Activated B cell treated with CpG ODN at 0.5 μM for 24 hours (primary cell): ENCODE measurements at regions of chr1 and their contacts with region 1.

Region 1: DNA sequence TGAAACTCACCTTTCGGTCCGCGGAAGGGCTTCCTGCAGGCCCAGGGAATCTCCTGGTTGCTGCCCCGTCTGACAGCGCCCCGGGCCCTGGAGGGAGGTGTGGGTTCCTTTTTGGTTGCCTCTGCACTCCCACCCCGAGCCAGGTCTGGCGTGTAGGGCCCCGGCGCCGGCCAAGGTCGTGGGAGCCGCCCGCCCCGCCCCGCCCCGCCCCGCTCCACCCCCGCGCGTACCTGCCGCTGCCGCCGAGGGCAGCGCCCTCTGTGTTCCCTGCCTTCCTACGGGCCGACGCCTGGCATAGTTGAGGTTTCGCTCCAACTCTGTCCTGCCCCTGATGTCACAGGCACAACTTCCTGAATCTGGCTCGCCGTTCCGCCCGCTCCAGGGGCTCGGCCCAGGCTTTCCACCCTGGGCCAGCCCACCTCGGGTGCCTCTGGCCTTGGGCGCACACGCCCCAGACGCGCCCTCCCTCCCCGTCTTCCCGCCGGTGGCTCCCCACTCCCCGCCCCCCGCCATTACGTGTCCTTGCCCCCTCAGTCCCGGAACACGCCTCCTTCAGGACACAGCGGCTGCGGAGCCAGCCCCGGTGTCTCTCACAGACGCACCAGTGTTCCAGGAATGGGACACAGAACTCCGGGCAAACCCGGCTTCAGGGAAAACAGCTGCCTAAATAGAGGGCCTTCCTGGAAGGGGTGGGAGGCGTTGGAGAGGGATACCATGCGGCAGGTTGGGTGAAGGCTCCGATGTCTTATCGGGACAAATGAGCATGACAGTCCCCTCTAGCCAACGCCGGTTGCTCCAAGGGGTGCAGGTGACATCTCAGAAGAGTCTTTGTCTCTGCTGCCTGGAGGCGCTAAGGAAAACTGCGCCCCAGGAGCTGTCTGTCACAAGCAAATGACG is at the start of gene KIAA0040:
- DNase-seq: peak; percentile 54
- ATAC-seq: peak; percentile 53
- H3K4me3 Mint-ChIP-seq: peak within 1 kb of the TSS; percentile 99
- H3K27ac Mint-ChIP-seq: peak within 1 kb of the TSS; percentile 97
- H3K4me1 Mint-ChIP-seq: peaks cover 92% of the 10 kb centered on the region
- H3K27me3 Mint-ChIP-seq: no peaks in the 10 kb centered on the region
- CTCF ChIP-seq: no peak
- total RNA-seq, gene KIAA0040: 55.5 and 57.2 TPM in 2 replicates

Region 2: GRCh38 chr1:175174309-175175165 is 18.3 kb before region 1 on chr1:
- CTCF ChIA-PET with region 1: no interaction called
- POLR2A ChIA-PET with region 1: interaction called, 9 read pairs
- intact Hi-C with region 1: loop called (anchors 2 kb)
- DNase-seq: no peak
- ATAC-seq: no peak
- H3K4me3 Mint-ChIP-seq: no peak overlapping the region
- H3K27ac Mint-ChIP-seq: peak overlapping the region; percentile 72
- H3K4me1 Mint-ChIP-seq: peaks cover 88% of the 10 kb centered on the region
- H3K27me3 Mint-ChIP-seq: no peaks in the 10 kb centered on the region
- CTCF ChIP-seq: no peak

Region 3: GRCh38 chr1:175179845-175180590 is 12.9 kb before region 1 on chr1:
- CTCF ChIA-PET with region 1: interaction called, 4 read pairs
- POLR2A ChIA-PET with region 1: interaction called, 11 read pairs
- intact Hi-C with region 1: loop called (anchors 1 kb)
- DNase-seq: no peak
- ATAC-seq: peak; percentile 42
- H3K4me3 Mint-ChIP-seq: peak overlapping the region; percentile 45
- H3K27ac Mint-ChIP-seq: peak overlapping the region; percentile 79
- H3K4me1 Mint-ChIP-seq: peaks cover 90% of the 10 kb centered on the region
- H3K27me3 Mint-ChIP-seq: no peaks in the 10 kb centered on the region
- CTCF ChIP-seq: no peak

Region 4: DNA sequence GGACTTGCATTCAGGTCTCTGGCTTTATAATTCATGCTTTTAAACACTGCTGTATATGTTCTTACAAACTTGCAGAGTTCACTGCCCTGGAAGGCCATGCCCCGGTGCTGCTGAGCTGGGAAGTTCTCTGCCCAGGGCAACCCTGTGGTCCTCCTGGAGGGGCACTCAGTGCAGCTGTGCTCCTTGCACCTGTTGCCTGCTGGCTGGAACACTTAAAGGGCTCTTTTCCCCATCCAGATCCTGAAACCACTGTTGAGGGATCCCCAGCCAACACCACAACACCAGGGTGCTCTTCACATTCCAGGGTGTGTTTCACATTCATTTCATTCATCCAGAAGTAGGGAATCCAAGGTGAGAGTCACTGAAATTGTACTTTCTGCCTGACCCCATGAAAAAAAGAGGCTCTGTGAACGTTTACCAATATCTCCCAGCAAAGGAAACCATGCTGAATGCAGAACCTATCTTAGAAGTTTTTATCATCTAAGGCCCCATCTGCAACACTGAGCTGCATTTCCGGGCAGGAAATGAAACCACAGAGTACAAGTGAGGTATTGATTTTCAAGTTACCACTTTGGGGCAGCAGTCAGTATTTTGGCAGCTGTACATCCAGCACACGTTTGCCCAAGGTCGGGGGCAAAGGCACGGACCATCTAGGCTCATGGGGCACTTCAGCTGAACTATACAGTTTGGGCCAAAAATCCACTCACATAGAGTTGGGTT is 16.1 kb after region 1 on chr1:
- CTCF ChIA-PET with region 1: interaction called, 13 read pairs
- POLR2A ChIA-PET with region 1: interaction called, 64 read pairs
- intact Hi-C with region 1: loop called (anchors 1 kb)
- DNase-seq: no peak
- ATAC-seq: peak; percentile 84
- H3K4me3 Mint-ChIP-seq: peak overlapping the region; percentile 80
- H3K27ac Mint-ChIP-seq: peak overlapping the region; percentile 98
- H3K4me1 Mint-ChIP-seq: peaks cover 64% of the 10 kb centered on the region
- H3K27me3 Mint-ChIP-seq: no peaks in the 10 kb centered on the region
- CTCF ChIP-seq: no peak

Region 5: GRCh38 chr1:175221666-175222175 is 28.8 kb after region 1 on chr1:
- CTCF ChIA-PET with region 1: interaction called, 6 read pairs
- POLR2A ChIA-PET with region 1: interaction called, 16 read pairs
- intact Hi-C with region 1: loop called (anchors 1 kb)
- DNase-seq: no peak
- ATAC-seq: no peak
- H3K4me3 Mint-ChIP-seq: no peak overlapping the region
- H3K27ac Mint-ChIP-seq: no peak overlapping the region
- H3K4me1 Mint-ChIP-seq: peaks cover 78% of the 10 kb centered on the region
- H3K27me3 Mint-ChIP-seq: no peaks in the 10 kb centered on the region
- CTCF ChIP-seq: no peak

Region 6: DNA sequence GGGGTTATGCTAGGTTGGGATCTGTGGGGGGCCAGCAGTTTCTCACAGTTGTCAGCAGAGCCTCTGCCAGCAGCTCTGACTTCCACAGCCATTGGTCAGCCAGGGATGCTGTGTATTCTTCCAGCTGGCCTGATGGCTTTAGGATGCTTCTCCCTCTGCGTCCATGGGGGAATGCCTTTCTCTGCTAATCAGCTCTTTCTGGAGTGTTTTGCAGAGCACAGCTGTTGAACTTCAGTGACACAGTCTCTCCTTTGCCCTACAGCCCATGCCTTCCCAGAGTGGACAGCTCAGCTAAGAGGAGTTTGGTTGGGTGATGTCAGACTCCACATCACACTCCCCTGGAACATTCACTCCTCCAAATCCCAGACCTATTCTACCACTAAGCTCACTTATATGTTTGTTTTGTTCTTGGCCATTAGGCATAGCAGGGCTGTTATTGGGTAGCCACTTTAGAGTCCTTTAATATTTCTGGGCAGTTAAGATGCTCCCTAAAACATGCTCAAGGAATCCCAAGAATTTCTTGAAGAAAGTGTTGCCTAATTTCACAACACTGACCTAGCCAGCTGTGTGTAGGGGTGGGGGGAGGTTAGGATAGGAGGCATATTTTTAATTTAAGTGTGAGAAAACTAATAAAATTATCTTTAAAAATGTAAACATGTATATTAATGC is 75.0 kb after region 1 on chr1:
- CTCF ChIA-PET with region 1: no interaction called
- POLR2A ChIA-PET with region 1: no interaction called
- intact Hi-C with region 1: no loop called
- DNase-seq: no peak
- ATAC-seq: no peak
- H3K4me3 Mint-ChIP-seq: no peak overlapping the region
- H3K27ac Mint-ChIP-seq: no peak overlapping the region
- H3K4me1 Mint-ChIP-seq: no peaks in the 10 kb centered on the region
- H3K27me3 Mint-ChIP-seq: no peaks in the 10 kb centered on the region
- CTCF ChIP-seq: no peak

Region 7: GRCh38 chr1:176206961-176207902 is 1014.4 kb after region 1 on chr1 and contains the start of gene COP1:
- CTCF ChIA-PET with region 1: no interaction called
- POLR2A ChIA-PET with region 1: no interaction called
- intact Hi-C with region 1: loop called (anchors 5 kb)
- DNase-seq: peak; percentile 92
- ATAC-seq: peak; percentile 82
- H3K4me3 Mint-ChIP-seq: peak within 1 kb of the TSS; percentile 95
- H3K27ac Mint-ChIP-seq: peak within 1 kb of the TSS; percentile 97
- H3K4me1 Mint-ChIP-seq: peaks cover 50% of the 10 kb centered on the region
- H3K27me3 Mint-ChIP-seq: peaks cover 2% of the 10 kb centered on the region
- CTCF ChIP-seq: no peak
- total RNA-seq, gene COP1: 46.3 and 52.1 TPM in 2 replicates